Naive thymus-derived CD4-positive, alpha-beta T cell (primary cell): ENCODE measurements at regions of chr1 and their contacts with region 1.

Region 1: DNA sequence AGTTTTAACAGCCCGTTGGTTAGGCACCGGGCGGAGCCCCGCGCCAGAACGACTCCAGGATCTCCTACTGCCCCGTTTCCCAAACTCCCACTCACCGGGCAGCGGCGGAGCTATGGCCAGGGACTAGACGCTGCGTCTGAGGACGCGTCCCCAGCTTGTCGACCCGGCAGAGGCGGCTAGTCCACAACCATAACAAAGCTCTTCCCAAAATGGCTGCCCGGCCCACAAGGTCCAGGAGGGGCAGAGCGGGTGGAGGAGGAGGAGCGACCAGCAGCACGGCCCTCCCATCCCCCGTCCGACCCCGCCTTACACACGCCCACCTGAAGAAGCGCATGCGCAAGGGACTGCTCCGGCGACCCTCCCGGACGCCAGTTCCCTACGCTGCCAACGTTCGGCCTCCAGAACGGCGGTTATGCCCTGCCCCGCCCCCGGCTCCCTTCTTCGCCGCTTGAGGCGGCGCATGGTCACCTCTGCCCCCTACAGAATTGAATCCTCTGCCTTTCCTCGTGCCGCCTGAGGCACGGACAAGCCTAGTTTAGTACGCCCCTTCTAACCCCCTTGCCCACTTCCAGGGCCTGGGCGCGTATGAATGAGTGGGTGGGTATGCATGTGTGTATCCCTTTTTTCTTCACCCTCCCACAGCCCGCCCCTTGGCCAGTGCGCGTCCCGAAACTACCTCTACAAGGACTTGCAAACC is at the start of gene GPBP1L1:
- DNase-seq: peak; percentile 94 to 98 (median 97)
- ATAC-seq: peak; percentile 85
- H3K4me3 ChIP-seq: peak within 1 kb of the TSS; percentile 86
- H3K4me3 Mint-ChIP-seq: peak within 1 kb of the TSS; percentile 95 to 100 (median 99)
- H3K27ac ChIP-seq: peak within 1 kb of the TSS; percentile 94
- H3K27ac Mint-ChIP-seq: peak within 1 kb of the TSS; percentile 99 to 100 (median 100)
- H3K4me1 ChIP-seq: peaks cover 29 to 35% of the 10 kb centered on the region in 2 donors
- H3K4me1 Mint-ChIP-seq: peaks cover 21 to 66% (median 50%) of the 10 kb centered on the region in 7 donors
- H3K27me3 ChIP-seq: no peaks in the 10 kb centered on the region
- H3K27me3 Mint-ChIP-seq: no peaks in the 10 kb centered on the region
- total RNA-seq, gene GPBP1L1: 110 to 180 (median 122) TPM

Region 2: DNA sequence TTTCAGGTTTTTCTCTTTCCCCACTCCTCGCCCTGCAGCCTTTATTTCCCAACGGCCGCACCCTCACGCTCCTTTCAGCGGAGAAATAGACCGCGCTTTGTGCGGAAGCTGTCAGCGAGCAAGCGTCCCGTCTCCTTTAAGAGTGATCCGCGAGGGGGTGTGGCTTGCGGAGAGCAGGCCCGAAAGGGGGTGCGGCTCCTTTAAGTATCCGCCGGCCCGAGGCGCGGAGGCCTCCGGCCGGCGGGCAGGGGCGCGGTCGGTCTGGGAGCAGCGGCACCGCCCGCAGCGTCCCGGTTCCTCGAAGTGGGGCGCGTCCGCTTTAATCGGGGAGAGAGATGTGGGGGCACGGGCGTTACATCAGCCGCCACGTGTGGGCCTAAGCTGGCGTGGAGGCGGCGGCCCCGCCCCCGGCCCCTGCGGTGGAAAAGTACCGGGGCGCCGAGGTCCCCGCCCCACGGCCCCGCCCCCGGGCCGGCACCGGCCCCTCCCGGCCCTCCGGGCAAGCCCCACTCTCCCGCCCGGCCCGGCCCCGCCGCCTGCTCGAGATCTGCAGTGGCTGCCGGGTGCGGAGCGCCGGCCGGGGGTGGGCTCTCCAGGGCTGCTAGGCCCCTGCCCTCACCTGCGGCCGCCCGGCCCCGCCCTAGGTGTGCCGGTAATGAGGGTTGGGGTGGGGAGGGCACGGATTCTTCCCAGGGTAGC is 1656.4 kb before region 1 on chr1:
- CTCF ChIA-PET with region 1: no interaction called
- POLR2A ChIA-PET with region 1: no interaction called
- intact Hi-C with region 1: loop called in 1 of 2 experiments (anchors 5 kb)
- DNase-seq: peak; percentile 73 to 90 (median 85)
- ATAC-seq: peak; percentile 90
- H3K4me3 ChIP-seq: peak overlapping the region; percentile 61
- H3K4me3 Mint-ChIP-seq: peak overlapping the region; percentile 94 to 99 (median 97)
- H3K27ac ChIP-seq: peak overlapping the region; percentile 78
- H3K27ac Mint-ChIP-seq: peak overlapping the region; percentile 92 to 98 (median 94)
- H3K4me1 ChIP-seq: peaks cover 0 to 7% of the 10 kb centered on the region in 2 donors
- H3K4me1 Mint-ChIP-seq: peaks cover 16 to 40% (median 23%) of the 10 kb centered on the region in 7 donors
- H3K27me3 ChIP-seq: no peaks in the 10 kb centered on the region
- H3K27me3 Mint-ChIP-seq: no peaks in the 10 kb centered on the region

Region 3: DNA sequence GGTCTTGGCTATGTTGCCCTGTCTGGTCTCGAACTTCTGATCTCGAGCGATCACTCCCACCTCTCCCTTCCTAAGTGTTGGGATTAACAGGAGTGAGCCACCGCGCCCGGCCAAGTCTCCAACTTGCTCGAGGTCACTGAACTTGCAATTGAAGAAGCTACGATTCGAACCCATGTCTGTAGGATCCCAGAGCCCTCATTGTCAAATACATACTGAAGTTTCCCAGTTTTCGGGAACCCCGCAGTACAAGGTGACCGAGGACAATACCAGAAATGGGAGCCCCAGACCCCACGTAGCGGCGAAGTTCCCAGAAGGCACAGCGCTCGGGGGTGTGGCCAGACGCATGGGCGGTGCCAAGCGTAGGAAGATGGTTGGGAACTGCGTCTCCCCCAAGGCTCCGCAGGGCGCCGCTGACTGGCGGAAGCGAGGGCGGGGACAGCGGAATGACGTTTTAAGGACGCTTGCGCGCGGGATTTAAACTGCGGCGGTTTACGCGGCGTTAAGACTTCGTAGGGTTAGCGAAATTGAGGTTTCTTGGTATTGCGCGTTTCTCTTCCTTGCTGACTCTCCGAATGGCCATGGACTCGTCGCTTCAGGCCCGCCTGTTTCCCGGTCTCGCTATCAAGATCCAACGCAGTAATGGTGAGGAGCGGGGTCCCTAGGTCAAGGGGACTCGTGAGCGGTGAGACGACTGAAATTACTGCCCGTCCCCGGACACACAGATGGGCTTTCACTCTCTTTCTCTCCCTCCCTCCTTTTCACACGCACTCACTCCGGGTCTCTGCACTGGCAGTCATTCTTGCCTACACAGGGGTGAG is 946.9 kb before region 1 on chr1 and contains the start of gene KIF2C:
- CTCF ChIA-PET with region 1: no interaction called
- POLR2A ChIA-PET with region 1: no interaction called
- intact Hi-C with region 1: loop called in 1 of 2 experiments (anchors 5 kb)
- DNase-seq: peak; percentile 87 to 96 (median 94)
- ATAC-seq: peak; percentile 100
- H3K4me3 ChIP-seq: peak within 1 kb of the TSS; percentile 79
- H3K4me3 Mint-ChIP-seq: peak within 1 kb of the TSS; percentile 84 to 99 (median 94)
- H3K27ac ChIP-seq: peak within 1 kb of the TSS; percentile 84
- H3K27ac Mint-ChIP-seq: peak within 1 kb of the TSS; percentile 86 to 97 (median 95)
- H3K4me1 ChIP-seq: peaks cover 5 to 7% of the 10 kb centered on the region in 2 donors
- H3K4me1 Mint-ChIP-seq: peaks cover 9 to 39% (median 19%) of the 10 kb centered on the region in 7 donors
- H3K27me3 ChIP-seq: no peaks in the 10 kb centered on the region
- H3K27me3 Mint-ChIP-seq: no peaks in the 10 kb centered on the region
- total RNA-seq, gene KIF2C: 0.32 to 69.3 (median 1.1) TPM

Region 4: GRCh38 chr1:45303582-45304310 is 382.7 kb before region 1 on chr1:
- CTCF ChIA-PET with region 1: interaction called, 3 read pairs
- POLR2A ChIA-PET with region 1: interaction called, 3 read pairs
- intact Hi-C with region 1: loop called (anchors 1 kb)
- DNase-seq: peak; percentile 86 to 96 (median 93)
- ATAC-seq: peak; percentile 94
- H3K4me3 ChIP-seq: peak overlapping the region; percentile 95
- H3K4me3 Mint-ChIP-seq: peak overlapping the region; percentile 89 to 96 (median 92)
- H3K27ac ChIP-seq: peak overlapping the region; percentile 88
- H3K27ac Mint-ChIP-seq: peak overlapping the region; percentile 90 to 97 (median 95)
- H3K4me1 ChIP-seq: peaks cover 7 to 9% of the 10 kb centered on the region in 2 donors
- H3K4me1 Mint-ChIP-seq: peaks cover 6 to 32% (median 26%) of the 10 kb centered on the region in 7 donors
- H3K27me3 ChIP-seq: no peaks in the 10 kb centered on the region
- H3K27me3 Mint-ChIP-seq: no peaks in the 10 kb centered on the region

Region 5: DNA sequence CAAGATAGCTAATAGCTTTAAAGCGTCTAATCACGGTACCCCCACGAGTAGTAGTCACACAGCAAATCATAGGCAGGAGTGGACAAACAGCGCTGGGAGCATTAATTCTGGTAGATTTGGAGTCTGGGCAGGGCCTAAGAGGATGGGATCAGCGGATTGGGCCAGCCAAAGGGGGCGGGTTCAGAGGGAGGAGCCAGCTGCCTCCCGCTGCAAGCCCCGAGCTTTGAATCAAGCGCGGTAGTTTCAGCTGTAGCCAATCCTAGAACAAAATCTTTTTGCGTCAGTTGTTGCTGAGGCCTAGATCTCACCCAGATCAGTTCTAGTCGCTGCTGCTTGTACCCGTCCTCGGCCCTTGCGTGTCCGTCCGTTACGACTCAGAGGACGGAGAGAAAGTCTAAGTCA is 103.2 kb before region 1 on chr1:
- CTCF ChIA-PET with region 1: interaction called, 3 read pairs
- POLR2A ChIA-PET with region 1: interaction called, 31 read pairs
- intact Hi-C with region 1: loop called (anchors 1 kb)
- DNase-seq: peak; percentile 77 to 97 (median 95)
- ATAC-seq: peak; percentile 86
- H3K4me3 ChIP-seq: peak overlapping the region; percentile 98
- H3K4me3 Mint-ChIP-seq: peak overlapping the region; percentile 89 to 100 (median 99)
- H3K27ac ChIP-seq: peak overlapping the region; percentile 91
- H3K27ac Mint-ChIP-seq: peak overlapping the region; percentile 91 to 99 (median 98)
- H3K4me1 ChIP-seq: peaks cover 16 to 18% of the 10 kb centered on the region in 2 donors
- H3K4me1 Mint-ChIP-seq: peaks cover 20 to 37% (median 26%) of the 10 kb centered on the region in 7 donors
- H3K27me3 ChIP-seq: no peaks in the 10 kb centered on the region
- H3K27me3 Mint-ChIP-seq: no peaks in the 10 kb centered on the region

Region 6: GRCh38 chr1:45803301-45803780 is 116.9 kb after region 1 on chr1 and contains the start of gene MAST2:
- CTCF ChIA-PET with region 1: interaction called, 4 read pairs
- POLR2A ChIA-PET with region 1: no interaction called
- intact Hi-C with region 1: loop called (anchors 1 to 2 kb)
- DNase-seq: peak; percentile 53 to 95 (median 71)
- ATAC-seq: peak; percentile 98
- H3K4me3 ChIP-seq: peak within 1 kb of the TSS; percentile 65
- H3K4me3 Mint-ChIP-seq: peak within 1 kb of the TSS; percentile 87 to 100 (median 92)
- H3K27ac ChIP-seq: peak within 1 kb of the TSS; percentile 41
- H3K27ac Mint-ChIP-seq: peak within 1 kb of the TSS; percentile 10 to 87 (median 77)
- H3K4me1 ChIP-seq: peaks cover 0 to 7% of the 10 kb centered on the region in 2 donors
- H3K4me1 Mint-ChIP-seq: peaks cover 21 to 33% (median 26%) of the 10 kb centered on the region in 7 donors
- H3K27me3 ChIP-seq: no peaks in the 10 kb centered on the region
- H3K27me3 Mint-ChIP-seq: no peaks in the 10 kb centered on the region
- total RNA-seq, gene MAST2: 4.9 to 22.7 (median 7.1) TPM

Region 7: DNA sequence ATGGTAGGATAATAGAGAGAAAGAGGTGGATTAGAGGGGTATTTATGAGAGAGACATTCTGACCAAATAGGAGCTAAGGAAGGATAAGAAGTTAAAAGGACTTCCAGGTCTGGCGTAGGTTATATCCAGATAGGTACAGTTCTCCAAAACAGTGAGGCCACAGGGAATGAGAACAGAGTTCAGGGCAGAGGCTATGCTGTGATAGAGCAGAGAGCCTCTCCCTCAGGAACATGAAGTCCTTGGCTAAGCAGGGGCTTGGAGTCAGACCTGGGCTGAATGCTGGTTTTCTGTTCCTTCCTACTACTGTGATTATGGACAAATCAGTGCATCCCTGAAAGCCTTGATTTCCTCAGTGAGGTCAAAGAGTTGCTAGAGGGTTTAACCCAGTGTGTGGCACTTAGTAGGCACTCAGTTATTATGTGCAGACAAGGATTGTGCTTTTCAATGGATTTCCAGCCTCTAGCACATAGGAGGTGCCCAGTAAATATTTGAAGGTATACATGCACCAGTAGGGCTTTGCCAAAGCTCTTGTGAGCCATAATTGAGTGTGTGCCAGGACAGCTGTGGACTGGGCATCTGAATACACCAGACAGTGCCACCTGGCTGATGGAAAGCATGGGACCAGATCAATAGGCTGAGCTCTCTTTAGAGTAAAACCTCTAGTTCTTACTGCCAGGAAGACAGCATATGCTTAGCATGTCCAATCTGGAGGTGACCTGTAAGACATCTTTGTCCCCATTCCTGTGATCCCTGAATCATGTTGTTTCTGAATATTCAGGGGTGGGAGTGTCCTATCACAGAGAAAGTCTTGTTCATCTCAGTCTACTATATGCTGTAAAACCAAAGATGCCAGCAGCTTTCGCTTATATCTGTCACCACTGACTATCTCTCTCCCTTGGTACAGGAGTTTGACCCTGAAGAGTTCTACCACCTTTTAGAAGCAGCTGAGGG is 334.9 kb after region 1 on chr1:
- CTCF ChIA-PET with region 1: no interaction called
- POLR2A ChIA-PET with region 1: no interaction called
- intact Hi-C with region 1: no loop called
- DNase-seq: no peak
- ATAC-seq: no peak
- H3K4me3 ChIP-seq: no peak overlapping the region
- H3K4me3 Mint-ChIP-seq: no peak overlapping the region
- H3K27ac ChIP-seq: no peak overlapping the region
- H3K27ac Mint-ChIP-seq: no peak overlapping the region
- H3K4me1 ChIP-seq: no peaks in the 10 kb centered on the region
- H3K4me1 Mint-ChIP-seq: no peaks in the 10 kb centered on the region
- H3K27me3 ChIP-seq: no peaks in the 10 kb centered on the region
- H3K27me3 Mint-ChIP-seq: no peaks in the 10 kb centered on the region

Region 8: DNA sequence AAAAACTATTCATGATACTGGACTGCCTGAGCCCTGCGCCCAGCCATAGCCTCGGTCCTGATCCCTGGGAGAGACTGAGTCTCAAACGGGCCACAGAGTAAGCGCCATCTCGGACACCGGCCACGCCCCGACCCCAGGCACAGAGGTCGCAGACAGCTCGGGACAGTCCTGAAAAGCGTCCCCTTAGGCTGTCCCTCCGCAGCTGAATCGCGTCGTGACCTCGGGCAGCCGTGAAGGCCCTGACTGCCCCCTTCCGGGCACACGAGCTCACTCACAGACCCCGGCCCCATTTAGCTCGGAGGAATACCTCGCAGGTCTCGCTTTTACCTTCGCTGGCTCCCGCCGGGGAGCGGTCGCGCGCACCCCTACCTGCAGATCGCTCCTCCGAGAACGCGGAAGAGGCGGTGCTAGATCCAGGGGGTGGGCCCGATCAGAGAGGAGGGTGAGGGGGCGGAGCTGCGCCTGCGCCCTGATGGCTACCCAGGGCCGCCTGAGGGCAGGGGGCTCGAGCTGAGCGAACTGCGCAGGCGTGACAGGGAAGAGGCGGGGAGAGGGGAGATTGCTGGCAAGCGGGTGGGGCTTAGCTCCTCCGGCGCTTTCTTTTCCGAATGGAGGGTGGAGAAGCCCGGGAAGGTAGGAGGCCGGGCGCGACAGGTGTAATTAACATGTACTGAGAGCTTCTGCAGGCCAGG is 917.5 kb after region 1 on chr1 and contains the start of gene MKNK1:
- CTCF ChIA-PET with region 1: no interaction called
- POLR2A ChIA-PET with region 1: no interaction called
- intact Hi-C with region 1: loop called in 1 of 2 experiments (anchors 5 kb)
- DNase-seq: peak; percentile 96 to 99 (median 99)
- ATAC-seq: peak; percentile 99
- H3K4me3 ChIP-seq: peak within 1 kb of the TSS; percentile 86
- H3K4me3 Mint-ChIP-seq: peak within 1 kb of the TSS; percentile 89 to 99 (median 94)
- H3K27ac ChIP-seq: peak within 1 kb of the TSS; percentile 75
- H3K27ac Mint-ChIP-seq: peak within 1 kb of the TSS; percentile 81 to 96 (median 93)
- H3K4me1 ChIP-seq: peaks cover 22 to 38% of the 10 kb centered on the region in 2 donors
- H3K4me1 Mint-ChIP-seq: peaks cover 53 to 76% (median 59%) of the 10 kb centered on the region in 7 donors
- H3K27me3 ChIP-seq: no peaks in the 10 kb centered on the region
- H3K27me3 Mint-ChIP-seq: no peaks in the 10 kb centered on the region
- total RNA-seq, gene MKNK1: 35.8 to 80.1 (median 54.1) TPM